ENCODE measurements at regions of chr18 and their contacts with region 1.

Region 1: DNA sequence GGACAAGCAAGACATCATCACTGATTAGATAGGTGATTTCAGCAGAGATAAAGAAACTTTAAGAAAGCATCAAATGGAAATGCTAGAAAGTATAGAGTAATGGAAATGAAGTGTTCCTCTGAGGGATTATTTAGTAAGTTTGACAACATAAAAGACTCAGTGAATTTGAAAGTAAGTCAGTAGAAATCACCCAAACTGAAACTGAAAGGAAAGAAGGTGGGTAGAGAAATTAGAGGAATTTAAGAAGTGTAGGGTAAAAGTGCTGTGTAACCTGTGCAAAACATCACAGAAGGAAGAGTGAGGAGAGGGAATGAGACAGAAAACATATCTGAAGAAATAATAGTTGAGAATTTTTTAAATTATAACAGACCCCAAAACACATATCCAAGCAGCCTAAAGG is 343.1 kb downstream of the CBLN2 start:
- DNase-seq: peak; percentile 7
- ATAC-seq: no peak
- H3K4me3 ChIP-seq: no peak overlapping the region
- H3K4me3 Mint-ChIP-seq: peak overlapping the region; percentile 20
- H3K27ac ChIP-seq: no peak overlapping the region
- H3K27ac Mint-ChIP-seq: no peak overlapping the region
- H3K4me1 ChIP-seq: no peaks in the 10 kb centered on the region
- H3K4me1 Mint-ChIP-seq: peaks cover 7% of the 10 kb centered on the region
- H3K27me3 ChIP-seq: no peaks in the 10 kb centered on the region
- H3K27me3 Mint-ChIP-seq: no peaks in the 10 kb centered on the region
- CTCF ChIP-seq: no peak

Region 2: DNA sequence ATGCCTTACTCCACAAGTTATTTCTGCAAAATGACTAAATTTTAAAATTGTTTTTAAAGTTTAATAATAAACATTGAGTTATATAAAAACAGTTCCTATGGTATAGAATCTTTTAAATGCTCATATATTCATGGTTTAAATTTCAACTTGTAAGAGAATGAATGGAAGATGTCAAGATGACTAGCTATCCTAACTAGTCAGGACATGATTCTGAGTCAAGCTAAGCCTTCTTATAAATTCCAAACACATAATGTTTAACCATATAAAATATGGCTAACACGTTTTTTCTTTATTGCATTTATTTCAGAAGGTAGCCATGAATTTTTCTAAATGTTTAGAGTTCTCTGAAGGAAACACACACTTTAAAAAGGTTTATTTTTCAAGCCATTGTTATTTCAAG is 22.7 kb after region 1 on chr18:
- CTCF ChIA-PET with region 1: no interaction called
- POLR2A ChIA-PET with region 1: no interaction called
- intact Hi-C with region 1: loop called (anchors 2 kb)
- DNase-seq: no peak
- ATAC-seq: no peak
- H3K4me3 ChIP-seq: no peak overlapping the region
- H3K4me3 Mint-ChIP-seq: no peak overlapping the region
- H3K27ac ChIP-seq: no peak overlapping the region
- H3K27ac Mint-ChIP-seq: no peak overlapping the region
- H3K4me1 ChIP-seq: no peaks in the 10 kb centered on the region
- H3K4me1 Mint-ChIP-seq: no peaks in the 10 kb centered on the region
- H3K27me3 ChIP-seq: no peaks in the 10 kb centered on the region
- H3K27me3 Mint-ChIP-seq: no peaks in the 10 kb centered on the region
- CTCF ChIP-seq: no peak